BJ (cell line): ENCODE measurements at regions of chr2 and their contacts with region 1.

Region 1: GRCh38 chr2:148643998-148644882 is at the start of gene EPC2:
- DNase-seq: no peak
- H3K4me3 ChIP-seq: peak within 1 kb of the TSS; percentile 90
- H3K27me3 ChIP-seq: peaks cover 5% of the 10 kb centered on the region
- CTCF ChIP-seq: no peak
- polyA plus RNA-seq, gene EPC2: 12.4 and 18.2 TPM in 2 replicates

Region 2: GRCh38 chr2:148670773-148671172 is 26.5 kb after region 1 on chr2:
- CTCF ChIA-PET with region 1: no interaction called
- POLR2A ChIA-PET with region 1: no interaction called
- DNase-seq: no peak
- H3K4me3 ChIP-seq: no peak overlapping the region
- H3K27me3 ChIP-seq: no peaks in the 10 kb centered on the region
- CTCF ChIP-seq: no peak

Region 3: DNA sequence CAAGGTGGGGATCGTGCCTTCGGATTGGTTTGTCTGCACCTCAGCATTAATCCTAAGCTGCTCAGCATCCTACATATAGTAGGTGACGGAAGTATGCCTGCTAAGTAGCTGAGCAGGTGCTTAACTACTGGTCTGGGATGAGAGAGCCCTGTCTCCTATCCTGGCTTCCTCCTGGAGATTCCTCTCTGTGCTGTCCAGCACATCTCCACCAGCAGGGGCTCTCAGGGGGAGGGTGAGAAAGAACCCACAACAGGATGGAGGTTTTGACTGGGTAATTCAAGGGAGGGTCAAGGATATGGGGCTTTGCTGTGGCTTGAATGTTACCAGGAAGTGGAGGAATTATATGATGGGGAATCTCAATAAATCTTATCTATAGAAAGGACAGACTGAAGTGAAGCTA is 185.4 kb after region 1 on chr2:
- CTCF ChIA-PET with region 1: no interaction called
- POLR2A ChIA-PET with region 1: no interaction called
- DNase-seq: no peak
- H3K4me3 ChIP-seq: no peak overlapping the region
- H3K27me3 ChIP-seq: peaks cover 1% of the 10 kb centered on the region; the same call in 1 of the 2 replicates
- CTCF ChIP-seq: no peak

Region 4: GRCh38 chr2:148989882-148990493 is 345.7 kb after region 1 on chr2:
- CTCF ChIA-PET with region 1: interaction called, 28 read pairs
- POLR2A ChIA-PET with region 1: no interaction called
- DNase-seq: no peak
- H3K4me3 ChIP-seq: no peak overlapping the region
- H3K27me3 ChIP-seq: no peaks in the 10 kb centered on the region; the same call in 1 of the 2 replicates
- CTCF ChIP-seq: peak; percentile 74